CD4-positive, alpha-beta memory T cell (primary cell): ENCODE measurements at regions of chr11 and their contacts with region 1.

Region 1: GRCh38 chr11:7986768-7987559 is at the start of gene EIF3F:
- DNase-seq: peak; percentile 93 to 98 (median 96)
- H3K4me3 ChIP-seq: peak within 1 kb of the TSS; percentile 63 to 77
- H3K4me3 Mint-ChIP-seq: peak within 1 kb of the TSS; percentile 89 to 97 (median 95)
- H3K27ac ChIP-seq: peak within 1 kb of the TSS; percentile 77
- H3K27ac Mint-ChIP-seq: peak within 1 kb of the TSS; percentile 89 to 99 (median 98)
- H3K4me1 ChIP-seq: peaks cover 36% of the 10 kb centered on the region
- H3K4me1 Mint-ChIP-seq: peaks cover 29 to 59% (median 46%) of the 10 kb centered on the region in 4 donors
- H3K27me3 ChIP-seq: no peaks in the 10 kb centered on the region
- H3K27me3 Mint-ChIP-seq: no peaks in the 10 kb centered on the region
- total RNA-seq, gene EIF3F: 317 to 330 TPM

Region 2: GRCh38 chr11:7630002-7630401 is 357.0 kb before region 1 on chr11:
- CTCF ChIA-PET with region 1: no interaction called
- POLR2A ChIA-PET with region 1: no interaction called
- intact Hi-C with region 1: no loop called
- DNase-seq: no peak
- H3K4me3 ChIP-seq: no peak overlapping the region
- H3K4me3 Mint-ChIP-seq: no peak overlapping the region
- H3K27ac ChIP-seq: no peak overlapping the region
- H3K27ac Mint-ChIP-seq: no peak overlapping the region
- H3K4me1 ChIP-seq: no peaks in the 10 kb centered on the region
- H3K4me1 Mint-ChIP-seq: no peaks in the 10 kb centered on the region
- H3K27me3 ChIP-seq: no peaks in the 10 kb centered on the region
- H3K27me3 Mint-ChIP-seq: no peaks in the 10 kb centered on the region

Region 3: GRCh38 chr11:7892840-7893254 is 94.1 kb before region 1 on chr11:
- CTCF ChIA-PET with region 1: interaction called, 102 read pairs
- POLR2A ChIA-PET with region 1: interaction called, 14 read pairs
- intact Hi-C with region 1: loop called (anchors 1 kb)
- DNase-seq: peak in 4 of 5 donors; percentile 37 to 49 (median 40)
- H3K4me3 ChIP-seq: no peak overlapping the region
- H3K4me3 Mint-ChIP-seq: no peak overlapping the region
- H3K27ac ChIP-seq: no peak overlapping the region
- H3K27ac Mint-ChIP-seq: no peak overlapping the region
- H3K4me1 ChIP-seq: peaks cover 3% of the 10 kb centered on the region
- H3K4me1 Mint-ChIP-seq: peaks cover 0 to 5% (median 3%) of the 10 kb centered on the region in 4 donors
- H3K27me3 ChIP-seq: no peaks in the 10 kb centered on the region
- H3K27me3 Mint-ChIP-seq: peaks cover 2 to 3% of the 10 kb centered on the region in 2 donors

Region 4: GRCh38 chr11:8018484-8019313 is 31.7 kb after region 1 on chr11:
- CTCF ChIA-PET with region 1: interaction called, 22 read pairs
- POLR2A ChIA-PET with region 1: interaction called, 12 read pairs
- intact Hi-C with region 1: loop called (anchors 1 kb)
- DNase-seq: peak; percentile 86 to 91 (median 89)
- H3K4me3 ChIP-seq: peak overlapping the region; percentile 23 to 74
- H3K4me3 Mint-ChIP-seq: peak overlapping the region; percentile 79 to 87 (median 84)
- H3K27ac ChIP-seq: peak overlapping the region; percentile 61
- H3K27ac Mint-ChIP-seq: peak overlapping the region; percentile 87 to 98 (median 93)
- H3K4me1 ChIP-seq: peaks cover 14% of the 10 kb centered on the region
- H3K4me1 Mint-ChIP-seq: peaks cover 10 to 20% (median 14%) of the 10 kb centered on the region in 4 donors
- H3K27me3 ChIP-seq: no peaks in the 10 kb centered on the region
- H3K27me3 Mint-ChIP-seq: peaks cover 15 to 20% of the 10 kb centered on the region in 2 donors

Region 5: GRCh38 chr11:8085011-8085645 is 98.2 kb after region 1 on chr11:
- CTCF ChIA-PET with region 1: no interaction called
- POLR2A ChIA-PET with region 1: no interaction called
- intact Hi-C with region 1: no loop called
- DNase-seq: no peak
- H3K4me3 ChIP-seq: no peak overlapping the region
- H3K4me3 Mint-ChIP-seq: no peak overlapping the region
- H3K27ac ChIP-seq: no peak overlapping the region
- H3K27ac Mint-ChIP-seq: no peak overlapping the region
- H3K4me1 ChIP-seq: peaks cover 7% of the 10 kb centered on the region
- H3K4me1 Mint-ChIP-seq: peaks cover 2 to 11% (median 7%) of the 10 kb centered on the region in 4 donors
- H3K27me3 ChIP-seq: peaks cover 19% of the 10 kb centered on the region
- H3K27me3 Mint-ChIP-seq: peaks cover 31 to 41% of the 10 kb centered on the region in 2 donors

Region 6: GRCh38 chr11:8682303-8683114 is 695.5 kb after region 1 on chr11 and contains the starts of genes RPL27A and TRIM66:
- CTCF ChIA-PET with region 1: no interaction called
- POLR2A ChIA-PET with region 1: interaction called, 13 read pairs
- intact Hi-C with region 1: no loop called
- DNase-seq: peak; percentile 98 to 99 (median 98)
- H3K4me3 ChIP-seq: peak within 1 kb of the TSS; percentile 61 to 87
- H3K4me3 Mint-ChIP-seq: peak within 1 kb of the TSS; percentile 89 to 99 (median 96)
- H3K27ac ChIP-seq: peak within 1 kb of the TSS; percentile 96
- H3K27ac Mint-ChIP-seq: peak within 1 kb of the TSS; percentile 97 to 99 (median 98)
- H3K4me1 ChIP-seq: peaks cover 34% of the 10 kb centered on the region
- H3K4me1 Mint-ChIP-seq: peaks cover 28 to 72% (median 40%) of the 10 kb centered on the region in 4 donors
- H3K27me3 ChIP-seq: no peaks in the 10 kb centered on the region
- H3K27me3 Mint-ChIP-seq: no peaks in the 10 kb centered on the region
- total RNA-seq, gene RPL27A: 1,456 to 1,504 TPM
- total RNA-seq, gene TRIM66: 25.0 to 31.3 TPM

Region 7: GRCh38 chr11:8688414-8689362 is 701.7 kb after region 1 on chr11:
- CTCF ChIA-PET with region 1: interaction called, 4 read pairs
- POLR2A ChIA-PET with region 1: interaction called, 13 read pairs
- intact Hi-C with region 1: loop called (anchors 2 kb)
- DNase-seq: peak; percentile 60 to 82 (median 68)
- H3K4me3 ChIP-seq: peak overlapping the region; percentile 86 to 96
- H3K4me3 Mint-ChIP-seq: peak overlapping the region; percentile 94 to 98 (median 97)
- H3K27ac ChIP-seq: peak overlapping the region; percentile 74
- H3K27ac Mint-ChIP-seq: peak overlapping the region; percentile 95 to 99 (median 97)
- H3K4me1 ChIP-seq: peaks cover 36% of the 10 kb centered on the region
- H3K4me1 Mint-ChIP-seq: peaks cover 31 to 57% (median 43%) of the 10 kb centered on the region in 4 donors
- H3K27me3 ChIP-seq: no peaks in the 10 kb centered on the region
- H3K27me3 Mint-ChIP-seq: no peaks in the 10 kb centered on the region